Activated CD8-positive, alpha-beta T cell treated with anti-CD3 and anti-CD28 coated beads for 36 hours (primary cell): ENCODE measurements at regions of chr19 and their contacts with region 1.

Region 1: GRCh38 chr19:10565567-10566407 is at the start of gene KRI1:
- DNase-seq: peak; percentile 99
- ATAC-seq: peak; percentile 43
- H3K4me3 Mint-ChIP-seq: peak within 1 kb of the TSS; percentile 86
- H3K27ac Mint-ChIP-seq: peak within 1 kb of the TSS; percentile 92
- H3K4me1 Mint-ChIP-seq: peaks cover 37% of the 10 kb centered on the region
- H3K27me3 Mint-ChIP-seq: no peaks in the 10 kb centered on the region
- CTCF ChIP-seq: peak; percentile 33
- total RNA-seq, gene KRI1: 50.0 to 58.3 TPM

Region 2: DNA sequence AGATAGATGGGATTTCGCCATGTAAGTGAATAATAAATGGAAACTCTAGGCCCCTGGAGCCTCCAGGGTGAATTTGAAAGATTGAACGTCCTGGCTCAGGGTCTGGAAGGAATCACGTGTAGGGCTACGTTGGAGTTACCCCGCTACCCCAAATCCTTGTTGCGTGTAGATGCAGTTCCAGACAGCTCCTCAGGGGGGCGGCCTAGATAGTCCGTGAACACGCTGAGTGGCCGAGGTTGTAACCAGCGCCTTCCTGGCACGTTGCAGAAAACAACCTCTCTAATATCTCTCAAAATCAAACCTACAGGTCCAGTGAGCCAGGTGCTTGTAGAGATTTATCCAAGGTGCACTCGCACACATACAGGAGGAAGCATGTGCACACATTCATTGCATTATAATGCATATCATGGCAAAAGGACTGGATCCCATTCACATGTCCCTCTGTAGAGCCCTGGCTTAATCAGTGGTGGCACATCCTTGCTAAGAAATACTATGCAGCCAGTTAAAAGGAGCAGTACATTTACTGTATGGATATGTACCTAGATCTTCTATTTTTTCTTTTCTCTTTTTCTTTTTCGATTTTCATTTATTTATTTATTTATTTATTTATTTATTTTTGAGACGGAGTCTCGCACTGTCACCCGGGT is 60.1 kb before region 1 on chr19:
- CTCF ChIA-PET with region 1: interaction called, 4 read pairs
- POLR2A ChIA-PET with region 1: interaction called, 6 read pairs
- intact Hi-C with region 1: loop called (anchors 5 kb)
- DNase-seq: peak; percentile 93
- ATAC-seq: peak; percentile 58
- H3K4me3 Mint-ChIP-seq: no peak overlapping the region
- H3K27ac Mint-ChIP-seq: no peak overlapping the region
- H3K4me1 Mint-ChIP-seq: peaks cover 23% of the 10 kb centered on the region
- H3K27me3 Mint-ChIP-seq: peaks cover 2% of the 10 kb centered on the region
- CTCF ChIP-seq: peak; percentile 82

Region 3: GRCh38 chr19:10543420-10544241 is 22.2 kb before region 1 on chr19 and contains the start of gene ATG4D:
- CTCF ChIA-PET with region 1: interaction called, 28 read pairs
- POLR2A ChIA-PET with region 1: interaction called, 4 read pairs
- intact Hi-C with region 1: no loop called
- DNase-seq: peak; percentile 80
- ATAC-seq: peak; percentile 84
- H3K4me3 Mint-ChIP-seq: peak within 1 kb of the TSS; percentile 81
- H3K27ac Mint-ChIP-seq: peak within 1 kb of the TSS; percentile 79
- H3K4me1 Mint-ChIP-seq: peaks cover 9% of the 10 kb centered on the region
- H3K27me3 Mint-ChIP-seq: peaks cover 13% of the 10 kb centered on the region
- CTCF ChIP-seq: no peak
- total RNA-seq, gene ATG4D: 21.7 to 22.5 TPM

Region 4: DNA sequence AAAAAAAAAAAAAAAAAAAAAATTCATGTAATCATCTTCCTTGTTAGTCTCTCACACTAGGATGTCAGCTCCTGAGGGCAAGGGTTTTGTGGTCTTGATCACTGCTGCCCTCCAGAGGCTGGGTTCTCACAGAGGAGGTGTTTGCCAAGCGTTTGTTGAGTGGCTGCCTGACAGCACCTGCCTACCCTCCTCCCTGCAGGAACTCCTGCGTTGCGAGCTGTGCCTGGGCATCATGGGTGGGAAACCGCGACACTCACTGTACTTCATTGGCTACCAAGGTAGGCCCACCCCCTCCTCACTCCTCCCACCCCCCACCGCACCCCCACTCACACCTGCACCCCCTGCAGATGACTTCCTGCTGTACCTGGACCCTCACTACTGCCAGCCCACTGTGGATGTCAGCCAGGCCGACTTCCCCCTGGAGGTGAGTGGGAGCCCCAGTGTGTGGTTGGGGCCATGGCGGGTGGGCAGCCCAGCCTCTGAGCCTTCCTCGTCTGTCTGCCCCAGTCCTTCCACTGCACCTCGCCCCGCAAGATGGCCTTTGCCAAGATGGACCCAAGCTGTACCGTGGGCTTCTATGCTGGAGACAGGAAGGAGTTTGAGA is 14.0 kb before region 1 on chr19:
- CTCF ChIA-PET with region 1: interaction called, 26 read pairs
- POLR2A ChIA-PET with region 1: interaction called, 104 read pairs
- intact Hi-C with region 1: no loop called
- DNase-seq: peak; percentile 73
- ATAC-seq: peak; percentile 14
- H3K4me3 Mint-ChIP-seq: no peak overlapping the region
- H3K27ac Mint-ChIP-seq: peak overlapping the region; percentile 92
- H3K4me1 Mint-ChIP-seq: peaks cover 54% of the 10 kb centered on the region
- H3K27me3 Mint-ChIP-seq: no peaks in the 10 kb centered on the region
- CTCF ChIP-seq: no peak

Region 5: DNA sequence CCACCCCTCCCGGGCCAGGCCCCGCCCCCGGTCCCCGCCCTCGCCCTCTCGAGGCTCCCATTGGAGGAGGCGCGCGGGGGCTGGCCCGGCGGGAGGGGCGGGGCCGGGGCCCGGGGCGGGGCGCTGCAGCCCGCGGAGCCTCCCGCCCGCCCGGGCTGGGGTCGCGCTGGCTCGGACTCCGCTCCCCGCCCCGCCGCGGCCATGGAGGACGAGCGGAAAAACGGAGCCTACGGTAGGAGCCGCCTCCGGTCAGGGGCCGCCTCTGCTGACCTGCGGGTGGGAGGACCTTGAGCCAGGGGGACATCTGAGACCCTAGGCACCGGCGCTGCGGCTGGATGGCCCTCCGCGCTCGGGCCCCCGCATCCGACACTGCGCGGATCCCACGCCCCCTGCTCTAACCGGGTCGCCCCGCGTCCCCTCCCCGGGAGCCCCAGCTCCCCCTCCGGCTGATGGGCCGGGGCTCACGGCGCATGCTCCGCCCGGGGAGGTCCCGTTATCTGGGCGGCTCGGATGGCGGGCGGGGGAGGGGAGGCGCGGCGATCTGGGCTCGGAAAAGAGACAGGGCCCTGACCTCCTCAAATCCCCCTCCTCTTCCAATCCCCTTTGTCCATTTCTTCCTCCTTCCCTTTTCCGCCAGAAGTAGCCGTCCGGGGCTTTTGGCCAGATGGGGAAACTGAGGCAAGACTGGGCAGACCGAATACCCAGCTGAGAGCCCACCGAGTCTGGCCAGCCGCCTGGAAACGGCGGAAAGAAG is 36.7 kb after region 1 on chr19:
- CTCF ChIA-PET with region 1: interaction called, 4 read pairs
- POLR2A ChIA-PET with region 1: interaction called, 25 read pairs
- intact Hi-C with region 1: no loop called
- DNase-seq: peak; percentile 93
- ATAC-seq: peak; percentile 86
- H3K4me3 Mint-ChIP-seq: peak overlapping the region; percentile 96
- H3K27ac Mint-ChIP-seq: peak overlapping the region; percentile 96
- H3K4me1 Mint-ChIP-seq: peaks cover 21% of the 10 kb centered on the region
- H3K27me3 Mint-ChIP-seq: no peaks in the 10 kb centered on the region
- CTCF ChIP-seq: no peak

Region 6: DNA sequence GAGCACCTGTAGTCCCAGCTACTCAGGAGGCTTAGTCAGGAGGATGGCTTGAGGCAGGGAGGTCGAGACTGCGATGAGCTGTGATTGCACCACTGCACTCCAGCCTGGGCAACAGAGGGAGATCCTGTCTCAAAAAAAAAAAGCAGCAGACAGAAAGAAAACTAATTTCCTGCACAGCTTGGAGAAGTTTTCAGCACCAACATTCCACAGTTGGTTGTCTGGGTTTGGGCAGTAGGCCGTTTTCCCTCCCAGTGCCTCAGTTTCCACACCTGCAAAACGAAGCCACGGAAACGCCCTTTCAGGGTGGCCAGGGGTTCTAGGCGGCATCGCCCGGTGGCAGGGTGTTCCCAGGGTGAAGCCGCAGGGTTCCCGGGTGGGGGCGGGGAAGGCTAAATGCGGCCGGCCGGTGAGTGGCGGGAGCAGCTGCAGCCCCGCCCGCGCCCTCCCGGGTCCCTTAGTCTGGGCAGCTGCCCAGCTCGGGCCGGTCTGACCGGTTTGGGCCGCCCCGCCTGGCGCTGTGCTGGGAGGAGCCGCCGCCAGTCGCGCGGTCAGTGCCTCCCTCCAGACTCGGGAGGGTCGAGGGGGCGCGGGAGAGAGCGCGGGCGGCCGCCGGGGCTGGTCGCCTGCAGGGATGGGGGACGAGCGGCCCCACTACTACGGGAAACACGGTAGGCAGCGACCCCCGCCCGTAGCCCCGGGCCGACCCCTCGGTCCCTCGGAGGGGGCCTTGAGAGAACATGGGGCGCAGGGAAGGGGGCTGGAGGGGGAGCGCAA is 59.4 kb after region 1 on chr19 and contains the start of gene SLC44A2:
- CTCF ChIA-PET with region 1: no interaction called
- POLR2A ChIA-PET with region 1: no interaction called
- intact Hi-C with region 1: no loop called
- DNase-seq: no peak
- ATAC-seq: no peak
- H3K4me3 Mint-ChIP-seq: no peak within 1 kb of the TSS
- H3K27ac Mint-ChIP-seq: peak within 1 kb of the TSS; percentile 46
- H3K4me1 Mint-ChIP-seq: peaks cover 34% of the 10 kb centered on the region
- H3K27me3 Mint-ChIP-seq: no peaks in the 10 kb centered on the region
- CTCF ChIP-seq: no peak
- total RNA-seq, gene SLC44A2: 66.0 to 71.4 TPM

Region 7: DNA sequence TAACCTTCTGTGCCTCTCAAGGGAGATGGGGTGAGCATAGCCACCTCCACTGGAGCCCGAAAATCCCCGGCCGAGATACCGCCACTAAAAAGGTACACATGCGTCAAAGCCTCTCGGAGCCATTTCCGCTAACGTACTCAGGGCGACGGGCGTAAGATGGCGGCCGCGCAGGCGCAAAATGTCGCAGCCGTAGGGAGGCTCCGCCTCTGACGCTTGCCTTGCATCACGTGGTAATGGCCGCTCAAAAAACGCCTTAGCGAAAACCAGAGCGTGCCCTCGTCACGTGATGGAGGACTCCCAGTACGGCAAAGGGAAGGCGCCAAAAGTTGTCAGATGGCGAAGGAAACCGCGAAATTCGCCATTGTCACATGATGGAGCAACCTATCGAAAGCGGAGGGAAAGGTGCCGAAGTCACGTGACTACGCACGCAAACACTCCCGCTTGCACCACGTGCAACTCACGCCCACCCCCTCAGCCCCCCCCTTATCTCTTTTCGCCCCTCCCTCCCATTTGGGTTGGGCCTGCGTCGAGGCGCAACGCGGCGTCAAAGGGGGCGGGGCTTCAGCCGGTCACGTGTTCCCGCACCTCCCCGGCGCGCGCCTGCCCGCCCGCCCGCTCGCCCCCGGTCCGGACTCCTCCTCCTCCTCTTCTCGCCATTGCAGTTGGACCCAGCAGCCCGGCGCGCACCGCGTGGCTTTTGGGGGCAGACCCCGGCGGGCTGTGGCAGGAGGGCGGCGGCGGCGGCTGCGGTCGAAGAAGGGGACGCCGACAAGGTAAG is 88.1 kb after region 1 on chr19 and contains the start of gene ILF3:
- CTCF ChIA-PET with region 1: interaction called, 3 read pairs
- POLR2A ChIA-PET with region 1: interaction called, 10 read pairs
- intact Hi-C with region 1: no loop called
- DNase-seq: peak; percentile 100
- ATAC-seq: peak; percentile 84
- H3K4me3 Mint-ChIP-seq: peak within 1 kb of the TSS; percentile 87
- H3K27ac Mint-ChIP-seq: peak within 1 kb of the TSS; percentile 98
- H3K4me1 Mint-ChIP-seq: peaks cover 28% of the 10 kb centered on the region
- H3K27me3 Mint-ChIP-seq: peaks cover 1% of the 10 kb centered on the region
- CTCF ChIP-seq: no peak
- total RNA-seq, gene ILF3: 435 to 450 TPM